ENCODE measurements at regions of chr3 and their contacts with region 1.

Region 1: GRCh38 chr3:16216373-16216940 is 42.0 kb downstream of the GALNT15 start:
- DNase-seq: no peak
- ATAC-seq: no peak
- H3K4me3 ChIP-seq: no peak overlapping the region
- H3K27ac ChIP-seq: no peak overlapping the region
- H3K4me1 ChIP-seq: no peaks in the 10 kb centered on the region
- H3K27me3 ChIP-seq: no peaks in the 10 kb centered on the region
- CTCF ChIP-seq: no peak
- POLR2A ChIP-seq: no peak

Region 2: DNA sequence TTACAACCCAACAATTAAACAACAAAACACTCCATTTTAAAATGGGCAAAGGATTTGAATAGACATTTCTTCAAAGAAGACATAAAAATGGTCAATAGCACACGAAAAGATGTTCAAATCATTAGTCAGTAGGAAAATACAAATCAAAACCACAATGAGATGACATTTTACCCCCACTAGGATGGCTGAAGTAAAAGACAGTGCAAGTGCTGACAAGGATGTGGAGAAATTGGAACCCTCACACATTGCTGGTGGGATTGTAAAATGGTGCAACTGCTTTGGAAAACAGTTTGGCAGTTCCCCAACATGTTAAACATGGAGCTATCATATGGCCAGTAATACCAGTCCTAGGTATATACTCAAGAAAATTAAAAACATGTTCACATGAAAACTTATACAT is 30.4 kb before region 1 on chr3:
- in situ Hi-C with region 1: no loop called
- intact Hi-C with region 1: loop called (anchors 1 kb)
- DNase-seq: no peak
- ATAC-seq: no peak
- H3K4me3 ChIP-seq: no peak overlapping the region
- H3K27ac ChIP-seq: no peak overlapping the region
- H3K4me1 ChIP-seq: peaks cover 0 to 14% of the 10 kb centered on the region in 2 donors
- H3K27me3 ChIP-seq: peaks cover 0 to 4% (median 0%) of the 10 kb centered on the region in 3 donors
- CTCF ChIP-seq: no peak
- POLR2A ChIP-seq: no peak

Region 3: DNA sequence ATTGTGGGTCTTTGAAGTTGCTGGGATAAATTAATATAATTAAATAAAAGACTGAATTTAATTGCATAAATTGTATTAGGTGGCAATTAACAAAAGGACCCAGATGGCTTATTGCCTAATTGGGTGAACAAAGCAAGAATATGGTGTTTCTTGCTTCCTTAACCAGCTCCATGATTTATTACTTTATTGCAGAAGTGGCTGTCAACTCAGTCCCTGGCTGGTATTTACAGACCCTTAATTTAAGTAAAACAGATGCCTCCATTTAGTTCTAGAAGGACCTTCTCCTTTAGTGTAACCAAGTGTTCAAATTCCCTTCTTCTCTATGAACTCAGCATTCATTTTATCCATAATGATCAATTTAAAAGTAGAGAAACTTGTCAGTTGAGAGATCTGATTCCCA is 13.2 kb after region 1 on chr3:
- in situ Hi-C with region 1: no loop called
- intact Hi-C with region 1: loop called (anchors 2 kb)
- DNase-seq: no peak
- ATAC-seq: no peak
- H3K4me3 ChIP-seq: no peak overlapping the region
- H3K27ac ChIP-seq: no peak overlapping the region
- H3K4me1 ChIP-seq: no peaks in the 10 kb centered on the region
- H3K27me3 ChIP-seq: no peaks in the 10 kb centered on the region
- CTCF ChIP-seq: no peak
- POLR2A ChIP-seq: no peak